ENCODE measurements at regions of chr12 and their contacts with region 1.

Region 1: DNA sequence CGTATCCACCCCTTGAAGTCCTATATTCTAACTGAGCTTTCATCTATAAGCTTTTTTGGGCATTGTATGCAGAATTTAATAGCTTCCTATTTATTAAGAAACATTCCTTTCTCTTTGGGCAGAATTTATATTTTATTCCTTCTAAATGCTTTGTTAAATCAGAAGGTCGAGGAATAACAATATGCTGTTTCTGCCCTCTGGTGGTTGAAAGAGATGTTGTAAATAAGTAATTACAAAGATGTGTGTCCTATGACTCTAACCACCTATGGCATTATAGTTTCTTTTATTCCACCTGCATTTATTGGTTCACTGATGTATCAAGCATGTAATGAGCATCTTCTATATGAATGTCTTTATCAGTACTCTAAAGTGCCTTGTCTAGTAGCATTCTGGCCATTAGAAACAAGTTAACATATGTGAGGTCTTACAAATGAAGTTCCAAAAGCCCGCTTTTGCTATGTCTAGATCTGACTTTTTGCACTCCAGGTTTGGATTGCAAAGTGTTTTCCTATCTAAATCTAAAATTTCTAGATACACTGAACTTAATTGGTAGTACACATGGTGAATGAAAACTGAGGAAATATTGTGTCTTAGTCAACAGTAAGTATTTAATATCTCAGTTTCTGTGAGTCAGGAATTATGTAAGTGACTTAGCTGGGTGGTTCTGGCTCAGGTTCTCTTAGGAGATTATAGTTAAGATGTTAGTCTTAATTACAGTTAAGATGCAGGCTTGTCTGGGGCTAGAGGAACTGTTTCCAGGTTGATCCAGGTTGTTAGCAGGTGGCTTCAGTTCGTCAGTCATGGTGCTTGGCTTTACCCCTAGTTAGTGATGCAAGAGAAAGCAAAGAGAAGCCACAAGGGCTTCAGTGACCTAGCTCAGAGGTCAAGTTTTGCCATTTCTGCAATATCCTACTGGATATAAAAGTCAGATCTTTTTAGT is 57.5 kb downstream of the PLEKHA5 start:
- DNase-seq: no peak
- ATAC-seq: peak; percentile 52

Region 2: DNA sequence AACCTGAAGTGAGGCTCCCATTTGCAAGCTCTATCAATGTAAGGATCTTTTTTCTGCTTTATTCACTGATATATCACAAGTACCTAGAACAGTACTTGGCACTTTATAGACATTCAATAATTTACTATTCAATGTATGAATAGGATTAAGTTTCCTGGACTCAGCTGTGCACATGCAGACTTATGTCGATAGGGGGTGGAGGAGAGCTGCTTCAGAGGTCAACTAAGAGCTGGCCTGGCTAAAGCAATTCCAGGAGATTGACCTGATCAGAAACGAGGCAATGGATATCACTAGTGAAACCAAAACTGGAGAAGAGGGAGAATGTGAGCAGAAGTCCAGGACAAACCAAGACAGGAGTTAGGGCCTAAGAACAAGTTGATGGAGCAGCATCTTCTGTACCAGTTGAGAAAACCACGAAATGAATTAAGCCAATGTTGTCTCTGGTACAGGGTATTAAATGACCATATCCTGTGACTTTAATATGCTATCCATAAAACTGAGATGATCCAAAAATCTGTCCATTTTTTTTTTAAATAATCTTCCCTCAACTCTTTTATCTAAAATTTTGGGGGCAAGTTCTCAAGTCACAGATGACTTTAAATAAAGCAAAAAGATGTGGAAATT is 756.5 kb before region 1 on chr12:
- intact Hi-C with region 1: loop called (anchors 1 kb)
- DNase-seq: no peak
- ATAC-seq: peak; percentile 83

Region 3: DNA sequence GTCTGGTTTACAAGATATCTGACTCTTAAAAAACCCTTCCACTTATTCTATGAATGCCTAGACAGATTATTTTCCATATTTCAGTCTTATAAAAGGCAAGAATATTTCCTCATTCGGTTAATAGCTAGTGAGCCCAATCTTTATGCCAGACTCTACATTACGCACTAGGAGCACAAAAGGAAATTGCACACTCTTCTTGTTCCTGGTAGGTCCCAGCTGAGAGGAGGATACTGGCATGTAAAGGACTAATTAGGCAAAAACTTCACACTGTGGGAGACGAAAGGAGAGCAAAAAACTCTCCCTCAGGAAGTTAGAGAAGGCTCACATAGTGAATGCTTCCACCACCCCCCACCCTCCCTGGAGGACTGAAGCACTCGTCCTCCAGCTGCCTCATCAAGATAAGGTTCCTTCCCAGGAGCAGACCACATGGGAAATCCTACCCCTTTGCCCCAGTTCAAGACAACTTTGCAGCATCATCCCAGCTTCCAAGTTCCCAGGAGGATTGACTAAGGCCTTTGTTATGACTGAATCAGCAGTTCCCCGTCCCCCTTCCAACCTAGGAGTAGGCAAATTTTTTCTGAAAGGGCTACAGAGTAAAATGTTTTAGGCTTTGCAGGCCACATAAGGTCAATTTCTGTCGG is 434.6 kb before region 1 on chr12:
- intact Hi-C with region 1: loop called (anchors 5 kb)
- DNase-seq: no peak
- ATAC-seq: peak; percentile 72

Region 4: GRCh38 chr12:19035536-19035935 is 151.5 kb before region 1 on chr12:
- intact Hi-C with region 1: loop called (anchors 2 kb)
- DNase-seq: no peak
- ATAC-seq: peak; percentile 74

Region 5: GRCh38 chr12:19251481-19251880 is 64.5 kb after region 1 on chr12:
- intact Hi-C with region 1: no loop called
- DNase-seq: no peak
- ATAC-seq: no peak

Region 6: DNA sequence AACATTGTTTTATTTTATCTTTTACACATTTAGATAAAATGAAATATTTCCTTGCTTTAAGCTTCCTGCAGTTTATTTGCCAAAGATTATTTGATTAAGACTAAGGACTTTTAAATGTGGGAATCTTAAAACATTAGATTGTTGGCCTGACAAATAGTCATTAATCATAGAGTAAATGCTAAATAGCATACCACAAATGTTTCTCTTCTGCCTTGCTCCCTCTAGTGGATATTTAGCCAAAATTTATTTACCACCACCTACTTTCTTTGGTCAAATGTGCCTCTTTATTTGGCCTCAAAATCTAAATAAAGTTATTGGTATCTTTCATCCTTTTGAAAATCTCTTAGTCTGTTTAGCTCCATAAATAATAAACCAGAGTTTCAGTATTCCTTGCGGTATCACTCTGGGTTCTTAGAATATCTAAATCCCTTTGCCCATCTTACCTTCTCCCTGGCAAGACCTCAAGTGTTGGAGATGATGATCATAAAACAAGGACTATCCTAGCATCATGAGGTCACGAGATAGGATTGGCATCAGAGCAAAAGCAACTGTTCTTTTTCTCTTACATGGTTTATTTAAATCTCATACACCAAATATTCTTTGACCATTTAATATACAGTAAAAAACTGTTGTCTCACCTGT is 101.7 kb after region 1 on chr12:
- intact Hi-C with region 1: loop called (anchors 1 kb)
- DNase-seq: no peak
- ATAC-seq: no peak